Activated CD4-positive, alpha-beta T cell treated with anti-CD3 and anti-CD28 coated beads, Interleukin-2, amount 10 ng/mL, durations not matched to agents 24 days and 14 days (primary cell): ENCODE measurements at regions of chr9 and their contacts with region 1.

Region 1: DNA sequence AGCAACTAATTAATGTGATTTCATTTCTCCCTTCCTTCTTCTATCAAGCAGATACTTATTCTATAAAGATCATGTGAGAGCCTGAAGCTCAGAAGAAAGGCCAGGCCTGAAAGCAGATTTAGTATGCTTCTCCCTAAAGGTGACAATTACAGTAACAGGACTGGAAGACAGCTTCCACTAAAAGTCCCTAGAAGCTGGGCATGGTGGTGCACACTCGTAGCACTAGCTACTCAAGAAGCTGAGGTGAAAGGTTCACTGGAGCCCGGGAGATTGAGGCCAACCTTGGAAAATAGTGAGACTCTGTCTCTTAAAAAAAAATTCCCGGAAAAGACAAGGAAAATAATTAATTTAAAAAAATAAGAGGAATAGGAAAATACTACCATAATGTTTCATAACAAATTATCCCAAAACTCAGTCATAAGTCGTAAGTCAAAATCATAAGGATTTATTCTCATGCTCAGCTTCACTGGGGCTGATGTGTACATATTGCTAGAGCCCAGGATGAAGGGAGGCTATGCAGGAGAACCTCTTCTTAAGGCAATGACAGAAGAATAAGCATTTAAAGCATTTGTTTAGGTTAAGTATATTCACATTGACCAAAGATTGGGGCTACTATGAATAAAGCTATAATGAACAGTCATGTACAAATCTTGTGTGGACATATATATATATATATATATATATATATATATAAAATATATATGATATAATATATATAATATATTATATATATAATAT is 210.8 kb upstream of the SMARCA2 start:
- DNase-seq: peak; percentile 57
- H3K4me3 Mint-ChIP-seq: no peak overlapping the region
- H3K27ac Mint-ChIP-seq: no peak overlapping the region
- H3K4me1 Mint-ChIP-seq: peaks cover 4% of the 10 kb centered on the region
- H3K27me3 Mint-ChIP-seq: no peaks in the 10 kb centered on the region

Region 2: GRCh38 chr9:1875921-1876448 is 71.7 kb after region 1 on chr9:
- intact Hi-C with region 1: loop called (anchors 5 kb)
- DNase-seq: peak; percentile 62
- H3K4me3 Mint-ChIP-seq: no peak overlapping the region
- H3K27ac Mint-ChIP-seq: peak overlapping the region; percentile 39
- H3K4me1 Mint-ChIP-seq: peaks cover 12% of the 10 kb centered on the region
- H3K27me3 Mint-ChIP-seq: peaks cover 14% of the 10 kb centered on the region

Region 3: GRCh38 chr9:1939926-1940368 is 135.7 kb after region 1 on chr9:
- intact Hi-C with region 1: no loop called
- DNase-seq: peak; percentile 75
- H3K4me3 Mint-ChIP-seq: no peak overlapping the region
- H3K27ac Mint-ChIP-seq: no peak overlapping the region
- H3K4me1 Mint-ChIP-seq: peaks cover 5% of the 10 kb centered on the region
- H3K27me3 Mint-ChIP-seq: peaks cover 6% of the 10 kb centered on the region

Region 4: DNA sequence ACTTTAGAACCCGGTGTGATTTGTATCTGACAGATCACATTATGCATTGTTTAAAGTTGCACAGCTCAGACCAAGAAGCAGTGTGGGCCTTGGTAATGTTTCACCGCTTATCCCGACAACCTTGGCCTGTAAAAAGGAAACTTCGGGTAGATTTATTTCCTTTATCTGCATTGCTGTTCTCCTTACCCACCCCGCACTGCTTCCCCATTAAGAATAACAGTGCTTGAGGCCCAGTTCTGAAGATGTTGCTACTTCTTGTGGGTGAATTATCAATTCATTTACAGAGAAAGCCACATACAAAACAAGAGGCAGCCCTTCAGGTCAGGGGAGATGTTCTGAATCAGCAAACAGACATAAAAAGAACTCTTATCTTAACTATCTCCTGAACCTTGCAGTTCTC is 219.2 kb after region 1 on chr9:
- intact Hi-C with region 1: loop called (anchors 10 kb)
- DNase-seq: peak; percentile 67
- H3K4me3 Mint-ChIP-seq: peak overlapping the region; percentile 78
- H3K27ac Mint-ChIP-seq: peak overlapping the region; percentile 86
- H3K4me1 Mint-ChIP-seq: peaks cover 85% of the 10 kb centered on the region
- H3K27me3 Mint-ChIP-seq: no peaks in the 10 kb centered on the region